ENCODE measurements at regions of chrX and their contacts with region 1.

Region 1: DNA sequence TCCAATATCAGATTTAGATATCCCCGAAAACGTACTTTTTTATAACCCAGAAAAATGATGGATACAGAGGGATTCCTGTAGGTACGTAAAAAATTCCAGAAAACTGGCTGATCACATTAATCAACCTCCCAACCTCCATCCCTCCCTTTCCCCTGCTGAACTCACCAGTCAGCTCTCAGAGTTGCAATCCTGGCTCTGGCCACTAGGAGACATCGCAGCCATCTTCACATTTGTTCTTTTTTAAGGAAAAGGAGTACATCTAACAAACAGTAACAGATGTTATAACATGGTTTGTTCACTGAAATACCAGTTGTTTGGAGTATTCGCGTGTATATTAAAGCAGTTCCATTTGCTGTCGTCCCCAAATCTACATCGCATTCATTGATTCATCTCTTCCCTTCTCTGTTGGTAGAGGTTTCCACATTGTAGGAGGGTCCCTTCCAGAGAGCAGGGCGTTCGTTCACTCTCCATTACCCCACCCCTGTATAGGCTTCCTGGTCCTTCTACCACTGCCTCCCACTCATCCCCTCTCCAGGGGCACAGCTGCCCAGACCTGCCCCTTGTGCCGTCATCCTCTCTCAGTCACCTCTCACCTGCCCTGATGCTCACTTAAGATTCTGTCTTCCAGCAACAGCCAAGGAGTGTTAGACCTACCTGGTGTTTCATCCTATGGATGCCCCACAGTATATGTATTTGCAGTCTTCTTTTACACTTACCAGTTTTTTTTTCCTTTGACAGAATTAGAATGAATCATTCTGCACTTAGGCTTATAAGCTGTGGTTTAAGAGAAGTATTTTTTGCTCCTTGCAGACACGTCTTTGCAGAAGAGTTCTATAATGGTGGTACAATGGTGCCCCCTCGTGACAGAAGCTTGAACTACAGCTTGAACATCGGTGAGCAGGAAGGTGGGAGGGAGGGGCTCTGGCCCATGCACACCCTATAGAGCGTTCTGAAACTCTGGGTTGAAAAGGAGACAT is 36.8 kb upstream of the RAB40AL start:
- DNase-seq: peak; percentile 49 to 78 (median 65)
- ATAC-seq: peak; percentile 88
- H3K4me3 ChIP-seq: no peak overlapping the region
- H3K4me3 Mint-ChIP-seq: peak overlapping the region; percentile 43
- H3K27ac ChIP-seq: no peak overlapping the region
- H3K27ac Mint-ChIP-seq: no peak overlapping the region
- H3K4me1 ChIP-seq: peaks cover 3% of the 10 kb centered on the region
- H3K4me1 Mint-ChIP-seq: peaks cover 10% of the 10 kb centered on the region
- H3K27me3 ChIP-seq: no peaks in the 10 kb centered on the region
- H3K27me3 Mint-ChIP-seq: no peaks in the 10 kb centered on the region
- CTCF ChIP-seq: peak; percentile 58

Region 2: GRCh38 chrX:102067966-102068708 is 832.1 kb before region 1 on chrX:
- CTCF ChIA-PET with region 1: interaction called, 3 read pairs
- POLR2A ChIA-PET with region 1: no interaction called
- intact Hi-C with region 1: loop called in 1 of 2 experiments (anchors 2 kb)
- DNase-seq: peak in 5 of 14 experiments; percentile 2 to 40 (median 18)
- ATAC-seq: no peak
- H3K4me3 ChIP-seq: no peak overlapping the region
- H3K4me3 Mint-ChIP-seq: no peak overlapping the region
- H3K27ac ChIP-seq: no peak overlapping the region
- H3K27ac Mint-ChIP-seq: no peak overlapping the region
- H3K4me1 ChIP-seq: no peaks in the 10 kb centered on the region
- H3K4me1 Mint-ChIP-seq: no peaks in the 10 kb centered on the region
- H3K27me3 ChIP-seq: no peaks in the 10 kb centered on the region
- H3K27me3 Mint-ChIP-seq: peaks cover 9% of the 10 kb centered on the region
- CTCF ChIP-seq: peak; percentile 46